Mucosa of descending colon (tissue), 3 donors: ENCODE measurements at regions of chr12 and their contacts with region 1.

Region 1: GRCh38 chr12:59096246-59096645 is 175.9 kb upstream of the LRIG3 start:
- DNase-seq: no peak
- ATAC-seq: no peak
- H3K4me3 ChIP-seq: no peak overlapping the region
- H3K4me1 ChIP-seq: no peaks in the 10 kb centered on the region
- CTCF ChIP-seq: no peak

Region 2: GRCh38 chr12:58540480-58541299 is 555.6 kb before region 1 on chr12:
- intact Hi-C with region 1: loop called in 1 of 2 experiments (anchors 5 kb)
- DNase-seq: peak; percentile 53 to 67 (median 65)
- ATAC-seq: peak; percentile 83
- H3K4me3 ChIP-seq: no peak overlapping the region
- H3K4me1 ChIP-seq: peaks cover 3% of the 10 kb centered on the region
- CTCF ChIP-seq: peak; percentile 23

Region 3: GRCh38 chr12:58681731-58682130 is 414.5 kb before region 1 on chr12:
- intact Hi-C with region 1: no loop called
- DNase-seq: no peak
- ATAC-seq: no peak
- H3K4me3 ChIP-seq: no peak overlapping the region
- H3K4me1 ChIP-seq: no peaks in the 10 kb centered on the region
- CTCF ChIP-seq: no peak

Region 4: GRCh38 chr12:59763835-59764234 is 667.6 kb after region 1 on chr12:
- intact Hi-C with region 1: no loop called
- DNase-seq: no peak
- ATAC-seq: no peak
- H3K4me3 ChIP-seq: no peak overlapping the region
- H3K4me1 ChIP-seq: no peaks in the 10 kb centered on the region
- CTCF ChIP-seq: no peak